GM10248 (cell line): ENCODE measurements at regions of chr1 and their contacts with region 1.

Region 1: GRCh38 chr1:221777431-221778072 is 35.7 kb upstream of the DUSP10 start:
- DNase-seq: peak; percentile 64
- CTCF ChIP-seq: no peak

Region 2: GRCh38 chr1:221761354-221762002 is 16.1 kb before region 1 on chr1:
- CTCF ChIA-PET with region 1: interaction called, 26 read pairs
- POLR2A ChIA-PET with region 1: interaction called, 4 read pairs
- DNase-seq: peak; percentile 42
- CTCF ChIP-seq: no peak